ENCODE measurements at regions of chr2 and their contacts with region 1.

Region 1: DNA sequence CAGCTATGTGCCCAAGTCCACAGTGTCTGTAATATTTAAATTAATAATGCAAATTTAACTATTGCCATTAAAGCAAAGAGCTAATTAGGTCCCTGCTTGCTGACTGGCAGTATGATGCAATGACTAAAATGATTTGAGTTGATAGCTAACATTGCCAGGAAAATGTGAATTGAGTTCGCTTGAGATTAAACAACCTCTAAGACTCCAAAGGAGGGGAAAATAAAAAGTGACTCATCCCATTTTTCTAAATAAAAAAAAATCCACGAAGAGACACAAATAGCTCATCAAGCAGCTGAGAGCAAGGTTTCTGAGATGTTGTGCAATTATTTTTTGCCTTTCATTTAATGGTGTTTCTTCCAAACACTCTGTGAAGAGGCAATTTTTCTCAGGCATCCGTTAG is 413.0 kb downstream of the MTX2 start:
- DNase-seq: no peak

Region 2: DNA sequence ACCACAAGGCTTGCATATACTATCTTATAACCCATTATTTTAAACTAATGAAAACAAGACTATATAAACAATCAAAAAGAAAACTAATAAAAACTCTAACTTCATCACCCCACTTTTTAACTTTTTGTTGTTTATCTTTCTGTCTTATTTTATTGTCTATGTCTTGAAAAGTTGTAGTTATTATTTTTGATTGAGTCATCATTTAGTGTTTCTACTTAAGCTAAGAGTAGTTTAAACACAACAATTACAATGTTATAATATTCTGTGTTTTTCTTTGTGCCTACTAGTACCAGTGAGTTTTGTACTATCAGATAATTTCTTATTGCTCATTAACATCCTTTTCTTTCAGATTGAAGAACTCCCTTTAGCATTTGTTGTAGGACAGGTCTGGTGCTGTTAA is 1182.0 kb before region 1 on chr2:
- intact Hi-C with region 1: no loop called
- DNase-seq: no peak

Region 3: GRCh38 chr2:176763851-176764404 is 81.7 kb after region 1 on chr2:
- intact Hi-C with region 1: loop called in 1 of 2 experiments (anchors 10 kb)
- DNase-seq: no peak